ENCODE measurements at regions of chr7 and their contacts with region 1.

Region 1: DNA sequence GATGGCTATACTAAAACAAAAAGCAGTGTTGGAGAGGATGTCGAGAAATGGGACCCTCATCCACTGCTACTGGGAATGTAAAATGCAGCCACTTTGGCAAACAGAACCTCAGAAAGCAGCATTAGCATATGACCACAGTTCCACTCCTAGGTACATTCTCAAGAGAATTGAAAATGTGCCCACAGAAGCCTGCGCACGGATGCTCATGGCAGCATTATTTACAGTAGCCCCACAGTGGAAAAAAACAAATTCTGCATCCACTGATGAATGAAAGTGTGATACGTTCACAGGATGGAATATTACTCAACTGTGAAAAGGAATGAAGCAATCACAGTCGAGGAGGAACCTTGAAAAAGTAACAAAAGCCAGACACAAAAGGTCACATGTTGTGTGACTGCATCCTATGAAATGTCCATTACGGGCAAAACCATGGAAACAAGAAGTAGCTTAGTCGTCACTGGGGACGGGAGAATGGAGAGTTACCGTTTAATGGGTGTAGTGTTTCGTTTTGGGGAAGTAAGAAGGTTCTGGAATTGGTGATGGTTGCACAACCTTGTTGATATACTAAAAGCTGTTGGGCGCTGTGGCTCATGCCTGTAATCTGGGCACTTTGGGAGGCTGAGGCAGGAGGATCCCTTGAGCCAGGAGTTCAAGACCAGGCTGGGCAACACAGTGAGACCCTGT is 2.5 kb upstream of the UPK3B start:
- DNase-seq: peak; percentile 75

Region 2: DNA sequence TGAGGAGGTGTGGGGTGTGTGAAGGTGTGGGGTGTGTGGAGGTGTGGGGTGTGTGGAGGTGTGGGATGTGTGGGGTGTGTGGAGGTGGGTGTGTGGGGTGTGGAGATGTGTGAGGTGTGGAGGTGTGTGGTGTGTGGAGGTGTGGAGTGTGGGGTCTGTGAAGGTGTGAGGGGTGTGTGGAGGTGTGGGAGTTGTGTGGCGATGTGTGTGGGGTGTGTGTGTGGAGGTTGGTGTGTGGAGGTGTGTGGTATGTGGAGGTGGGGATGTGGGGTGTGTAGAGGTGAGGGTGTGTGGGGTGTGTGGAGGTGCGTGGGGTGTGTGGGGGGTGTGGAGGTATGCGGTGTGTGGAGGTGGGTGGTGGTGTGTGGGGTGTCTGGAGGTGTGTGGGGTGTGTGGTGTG is 489.5 kb after region 1 on chr7:
- intact Hi-C with region 1: loop called in 1 of 2 experiments (anchors 5 kb)
- DNase-seq: no peak